GM10248 (cell line): ENCODE measurements at regions of chr13 and their contacts with region 1.

Region 1: DNA sequence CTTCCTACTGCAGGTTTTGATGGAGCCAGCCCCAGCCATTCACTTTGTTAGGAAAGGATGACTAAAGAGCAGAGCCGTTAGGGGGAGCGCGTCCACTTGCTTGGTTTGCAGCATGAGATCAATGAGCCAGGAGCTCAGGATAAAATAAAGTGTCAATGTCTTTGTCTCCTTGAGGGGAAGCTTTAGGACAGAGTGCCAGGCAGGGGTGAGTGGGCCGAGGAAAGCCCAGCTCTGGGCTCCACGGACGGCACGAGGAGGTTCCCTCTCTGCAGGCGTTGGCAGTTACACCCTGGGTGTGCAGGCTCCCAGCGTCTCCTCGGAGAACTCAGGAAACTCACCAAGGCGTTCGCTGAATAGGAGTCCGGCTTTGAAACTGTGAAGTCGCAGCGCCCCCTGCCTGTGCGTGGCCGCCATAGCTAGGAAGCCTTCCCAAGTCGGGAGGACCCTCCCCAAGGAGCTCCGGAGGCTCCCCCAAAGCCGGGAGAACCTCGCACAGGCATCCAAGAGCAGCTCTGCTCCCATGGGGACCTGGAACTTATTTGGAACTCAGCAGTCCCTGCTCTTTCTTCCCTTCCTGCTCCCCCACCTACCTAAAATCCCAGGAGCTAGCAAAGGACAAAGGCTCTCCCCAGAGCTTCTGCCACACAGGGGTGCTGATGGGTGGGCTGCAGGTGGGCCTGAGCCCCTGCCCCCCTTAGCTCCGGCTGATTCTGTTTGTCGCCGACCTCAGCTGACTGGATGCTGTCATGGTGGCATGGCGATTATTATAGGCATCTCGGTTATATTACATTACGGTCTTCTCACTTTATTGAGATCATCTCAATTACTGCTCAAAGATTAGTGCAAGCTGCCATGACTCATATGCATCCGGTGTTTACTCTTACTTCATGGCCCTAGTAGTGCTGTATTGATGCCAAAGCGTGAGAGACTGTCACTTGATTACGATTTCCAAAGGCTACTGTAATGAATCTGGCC is 34.4 kb downstream of the GSX1 start:
- DNase-seq: peak; percentile 83
- CTCF ChIP-seq: peak; percentile 97

Region 2: GRCh38 chr13:26985285-26985878 is 841.3 kb before region 1 on chr13:
- CTCF ChIA-PET with region 1: interaction called, 22 read pairs
- POLR2A ChIA-PET with region 1: no interaction called
- DNase-seq: peak; percentile 70
- CTCF ChIP-seq: peak; percentile 84

Region 3: GRCh38 chr13:27383127-27383921 is 443.3 kb before region 1 on chr13:
- CTCF ChIA-PET with region 1: interaction called, 205 read pairs
- POLR2A ChIA-PET with region 1: no interaction called
- DNase-seq: no peak
- CTCF ChIP-seq: no peak

Region 4: GRCh38 chr13:27770809-27771208 is 55.9 kb before region 1 on chr13:
- CTCF ChIA-PET with region 1: interaction called, 84 read pairs
- POLR2A ChIA-PET with region 1: no interaction called
- DNase-seq: peak; percentile 57
- CTCF ChIP-seq: peak; percentile 42

Region 5: GRCh38 chr13:27839809-27840467 is 13.3 kb after region 1 on chr13:
- CTCF ChIA-PET with region 1: interaction called, 79 read pairs
- POLR2A ChIA-PET with region 1: no interaction called
- DNase-seq: no peak
- CTCF ChIP-seq: no peak

Region 6: GRCh38 chr13:27977476-27978300 is 151.0 kb after region 1 on chr13:
- CTCF ChIA-PET with region 1: interaction called, 404 read pairs
- POLR2A ChIA-PET with region 1: no interaction called
- DNase-seq: no peak
- CTCF ChIP-seq: no peak

Region 7: DNA sequence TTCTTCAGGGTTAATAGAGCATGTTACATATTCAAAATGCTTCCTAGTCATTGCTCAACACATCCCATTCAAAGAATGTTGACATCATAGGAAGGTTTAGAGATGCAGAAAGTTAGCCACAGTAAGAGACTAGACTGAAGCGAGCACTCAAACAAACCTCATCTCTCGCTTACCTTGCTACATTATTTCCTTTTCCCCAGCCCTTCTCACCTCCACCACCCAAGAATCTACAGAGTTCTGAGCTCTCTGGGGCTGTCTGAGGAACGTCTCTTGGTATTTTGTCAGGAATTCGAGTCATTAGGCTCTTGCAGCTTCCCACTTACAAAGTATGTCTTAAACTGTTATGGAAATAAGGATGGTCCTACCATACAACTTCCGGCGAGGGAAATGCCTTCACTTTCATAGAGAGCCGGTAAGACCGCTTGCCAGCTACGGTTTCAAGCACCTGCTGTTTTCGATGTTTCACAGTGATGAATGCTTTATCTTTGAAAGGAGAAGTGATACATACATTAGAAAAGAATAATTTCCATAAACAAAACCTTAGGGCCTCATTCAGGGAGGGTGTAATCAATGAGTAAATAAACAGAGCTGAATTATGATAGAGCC is 603.1 kb after region 1 on chr13:
- CTCF ChIA-PET with region 1: no interaction called
- POLR2A ChIA-PET with region 1: no interaction called
- DNase-seq: peak; percentile 46
- CTCF ChIP-seq: no peak